Esophagus squamous epithelium (tissue), 5 donors: ENCODE measurements at regions of chr2 and their contacts with region 1.

Region 1: GRCh38 chr2:198135481-198135934 is 331.1 kb downstream of the PLCL1 start:
- DNase-seq: no peak
- H3K4me3 ChIP-seq: no peak overlapping the region
- H3K27ac ChIP-seq: no peak overlapping the region
- H3K4me1 ChIP-seq: no peaks in the 10 kb centered on the region
- H3K27me3 ChIP-seq: no peaks in the 10 kb centered on the region
- CTCF ChIP-seq: no peak
- POLR2A ChIP-seq: no peak

Region 2: DNA sequence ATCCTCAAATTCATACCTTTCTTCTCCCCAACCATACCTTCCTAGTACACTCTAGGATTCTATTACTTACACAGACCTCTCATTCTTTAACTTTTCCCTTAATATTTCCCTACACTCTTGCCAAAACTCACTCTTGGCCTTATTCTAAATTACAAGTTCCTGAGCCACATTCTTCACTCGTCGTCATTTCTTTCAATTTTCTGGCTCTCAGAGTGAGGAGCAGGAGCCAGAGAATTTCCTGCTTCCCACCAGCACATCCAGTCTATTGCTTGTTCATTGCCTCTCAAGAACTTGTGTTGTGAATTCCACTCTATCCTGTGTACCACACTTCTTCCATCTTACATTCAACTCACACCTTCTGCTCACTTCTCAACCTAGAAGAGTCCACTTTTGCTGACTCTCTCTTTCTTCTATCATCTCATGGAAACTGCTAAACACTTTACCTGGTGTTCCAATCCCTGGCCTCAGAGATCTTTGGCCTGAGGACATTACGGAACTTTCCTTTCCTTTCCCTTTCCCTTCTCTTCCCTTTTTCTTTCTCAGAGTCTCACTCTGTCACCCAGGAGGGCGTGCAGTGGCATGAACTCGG is 159.5 kb before region 1 on chr2:
- intact Hi-C with region 1: no loop called
- DNase-seq: no peak
- H3K4me3 ChIP-seq: no peak overlapping the region
- H3K27ac ChIP-seq: no peak overlapping the region
- H3K4me1 ChIP-seq: peaks cover 0 to 14% (median 0%) of the 10 kb centered on the region in 3 donors
- H3K27me3 ChIP-seq: no peaks in the 10 kb centered on the region
- CTCF ChIP-seq: no peak
- POLR2A ChIP-seq: no peak

Region 3: DNA sequence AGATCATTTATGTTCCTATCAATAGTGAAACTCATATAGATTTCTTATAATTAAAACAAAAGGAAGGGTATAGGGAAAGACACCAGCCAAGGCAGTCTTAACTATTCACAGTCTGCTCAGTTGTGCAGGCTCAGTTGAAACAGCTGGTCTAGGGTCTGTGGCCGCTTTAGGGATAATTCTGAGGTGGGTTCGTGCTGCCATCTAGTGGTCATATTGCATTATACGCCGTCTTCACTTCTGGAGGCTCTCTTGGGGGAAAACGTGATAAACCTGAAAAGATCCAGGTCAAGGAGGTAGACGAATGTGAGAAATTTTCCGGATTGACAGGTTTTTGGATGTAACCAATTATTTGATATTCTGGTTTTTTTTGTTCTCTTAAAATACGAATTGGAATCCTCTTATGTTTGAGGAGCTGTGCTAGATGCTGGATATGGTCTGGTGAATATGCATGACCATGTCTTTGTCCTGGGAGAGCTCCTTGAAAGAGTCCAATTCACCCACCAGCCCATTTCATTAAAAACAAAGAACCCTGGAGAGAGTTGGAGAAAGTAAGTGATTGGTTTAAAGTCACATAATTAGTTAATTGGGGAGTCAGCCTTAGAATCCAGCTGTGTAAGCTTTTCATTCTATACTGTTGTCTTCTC is 161.3 kb after region 1 on chr2:
- intact Hi-C with region 1: loop called (anchors 10 kb)
- DNase-seq: no peak
- H3K4me3 ChIP-seq: no peak overlapping the region
- H3K27ac ChIP-seq: no peak overlapping the region
- H3K4me1 ChIP-seq: no peaks in the 10 kb centered on the region
- H3K27me3 ChIP-seq: peaks cover 0 to 5% (median 0%) of the 10 kb centered on the region in 4 donors
- CTCF ChIP-seq: peak; percentile 59 to 83 (median 69)
- POLR2A ChIP-seq: no peak